PC-3 (cell line): ENCODE measurements at regions of chr12 and their contacts with region 1.

Region 1: DNA sequence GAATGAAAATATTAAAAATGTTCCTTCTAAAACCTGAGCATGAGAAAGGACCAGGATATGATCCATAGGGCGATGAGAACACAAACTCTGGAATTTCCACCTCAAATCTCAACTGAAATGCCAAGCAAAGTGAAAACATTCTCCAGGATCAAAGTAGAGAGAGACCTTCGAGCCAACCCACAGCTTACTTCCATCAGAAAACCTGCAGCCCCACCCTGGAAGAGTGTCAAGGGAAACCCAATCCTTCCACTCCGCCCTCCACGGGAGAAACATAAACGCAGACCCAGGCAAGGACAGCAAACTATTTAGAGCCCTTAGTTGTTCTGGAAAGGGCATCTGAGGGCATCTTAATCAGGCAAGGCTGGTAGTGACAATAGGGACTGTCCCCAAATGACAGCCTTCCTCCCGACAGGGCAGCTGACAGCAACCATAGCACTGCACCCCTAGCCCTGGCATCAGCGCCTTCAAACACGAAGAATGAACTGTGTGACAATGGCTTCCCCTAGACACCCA is 21.8 kb downstream of the SLC15A4 start:
- DNase-seq: peak; percentile 70
- ATAC-seq: peak; percentile 65
- H3K4me3 ChIP-seq: peak overlapping the region; percentile 27; the same call in 1 of the 2 replicates
- H3K27ac ChIP-seq: peak overlapping the region; percentile 69
- H3K4me1 ChIP-seq: peaks cover 44% of the 10 kb centered on the region
- H3K27me3 ChIP-seq: no peaks in the 10 kb centered on the region
- CTCF ChIP-seq: no peak

Region 2: GRCh38 chr12:128783129-128783574 is 18.8 kb before region 1 on chr12:
- CTCF ChIA-PET with region 1: no interaction called
- POLR2A ChIA-PET with region 1: no interaction called
- intact Hi-C with region 1: loop called (anchors 1 kb)
- DNase-seq: no peak
- ATAC-seq: peak; percentile 43
- H3K4me3 ChIP-seq: no peak overlapping the region
- H3K27ac ChIP-seq: no peak overlapping the region
- H3K4me1 ChIP-seq: no peaks in the 10 kb centered on the region
- H3K27me3 ChIP-seq: no peaks in the 10 kb centered on the region
- CTCF ChIP-seq: no peak

Region 3: GRCh38 chr12:128817111-128818015 is 15.4 kb after region 1 on chr12:
- CTCF ChIA-PET with region 1: no interaction called
- POLR2A ChIA-PET with region 1: no interaction called
- intact Hi-C with region 1: loop called (anchors 2 kb)
- DNase-seq: no peak
- ATAC-seq: no peak
- H3K4me3 ChIP-seq: no peak overlapping the region
- H3K27ac ChIP-seq: no peak overlapping the region
- H3K4me1 ChIP-seq: 0 out of 2 replicates have a peak, but pooled peaks cover 5% of the 10 kb centered on the region
- H3K27me3 ChIP-seq: no peaks in the 10 kb centered on the region
- CTCF ChIP-seq: no peak

Region 4: DNA sequence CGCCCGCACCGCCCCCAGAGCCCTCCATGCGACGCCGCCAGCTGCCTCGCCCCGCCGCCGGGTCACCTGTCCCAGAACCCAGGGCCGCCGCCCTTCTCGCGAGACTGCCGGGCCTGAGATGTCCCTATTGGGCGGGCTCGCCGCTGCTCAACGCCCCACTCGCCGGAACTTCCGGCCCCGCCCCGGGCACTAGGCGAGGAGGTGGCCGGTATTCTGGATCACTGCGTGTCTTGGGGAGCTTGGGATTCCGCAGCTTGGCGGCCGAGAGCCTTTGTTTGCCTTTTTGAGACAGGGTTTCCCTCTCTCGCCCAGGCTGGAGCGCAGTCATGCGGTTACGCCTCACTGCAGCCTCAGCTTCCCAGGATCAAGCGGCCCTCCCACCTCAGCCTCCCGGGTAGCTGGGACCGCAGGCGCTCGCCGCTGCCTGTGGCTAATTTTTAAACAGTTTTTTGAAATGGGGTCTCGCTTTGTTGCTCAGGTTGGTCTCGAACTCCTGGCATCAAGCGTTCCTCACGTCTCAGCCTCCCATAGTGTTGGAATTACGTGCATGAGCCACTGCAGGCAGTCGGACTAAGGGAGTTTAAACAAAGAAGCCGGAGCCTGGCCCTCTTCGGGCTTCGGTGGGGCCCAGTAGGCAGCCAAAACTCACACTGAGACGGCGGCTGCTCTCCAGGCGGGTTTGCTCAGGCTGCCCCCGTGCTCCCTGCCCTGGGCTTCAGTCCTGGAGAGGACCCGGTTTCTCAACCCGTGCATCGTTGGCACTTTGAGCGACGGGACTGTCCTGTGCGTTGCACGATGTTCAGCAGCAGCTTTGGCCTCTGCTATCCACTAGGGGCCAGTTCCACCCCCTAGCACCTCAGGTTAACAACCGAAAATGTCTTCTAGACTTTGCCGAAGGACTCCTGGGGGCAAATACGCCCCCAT is 22.2 kb after region 1 on chr12 and contains the start of gene SLC15A4:
- CTCF ChIA-PET with region 1: no interaction called
- POLR2A ChIA-PET with region 1: interaction called, 3 read pairs
- intact Hi-C with region 1: loop called (anchors 1 kb)
- DNase-seq: peak; percentile 95
- ATAC-seq: peak; percentile 96
- H3K4me3 ChIP-seq: peak within 1 kb of the TSS; percentile 97
- H3K27ac ChIP-seq: peak within 1 kb of the TSS; percentile 27; the same call in 1 of the 2 replicates
- H3K4me1 ChIP-seq: peaks cover 12% of the 10 kb centered on the region
- H3K27me3 ChIP-seq: no peaks in the 10 kb centered on the region
- CTCF ChIP-seq: no peak
- total RNA-seq, gene SLC15A4: 19.4 and 20.8 TPM in 2 replicates

Region 5: GRCh38 chr12:129119537-129119936 is 317.6 kb after region 1 on chr12:
- CTCF ChIA-PET with region 1: no interaction called
- POLR2A ChIA-PET with region 1: no interaction called
- intact Hi-C with region 1: no loop called
- DNase-seq: no peak
- ATAC-seq: no peak
- H3K4me3 ChIP-seq: no peak overlapping the region
- H3K27ac ChIP-seq: no peak overlapping the region
- H3K4me1 ChIP-seq: no peaks in the 10 kb centered on the region
- H3K27me3 ChIP-seq: no peaks in the 10 kb centered on the region
- CTCF ChIP-seq: no peak